Spleen (tissue), 13 donors: ENCODE measurements at regions of chr2 and their contacts with region 1.

Region 1: GRCh38 chr2:64727013-64727767 is 73.5 kb upstream of the SERTAD2 start:
- DNase-seq: no peak
- H3K4me3 ChIP-seq: peak overlapping the region in 2 of 8 donors; percentile 2 to 30
- H3K27ac ChIP-seq: peak overlapping the region; percentile 72 to 91 (median 86)
- H3K4me1 ChIP-seq: peaks cover 38 to 65% (median 56%) of the 10 kb centered on the region in 6 donors
- H3K27me3 ChIP-seq: no peaks in the 10 kb centered on the region
- CTCF ChIP-seq: no peak
- POLR2A ChIP-seq: peak in 1 of 3 donors; percentile 9

Region 2: GRCh38 chr2:64675860-64676259 is 51.3 kb before region 1 on chr2:
- intact Hi-C with region 1: loop called (anchors 10 kb)
- DNase-seq: no peak
- H3K4me3 ChIP-seq: no peak overlapping the region
- H3K27ac ChIP-seq: no peak overlapping the region
- H3K4me1 ChIP-seq: peaks cover 0 to 31% (median 3%) of the 10 kb centered on the region in 6 donors
- H3K27me3 ChIP-seq: no peaks in the 10 kb centered on the region
- CTCF ChIP-seq: no peak
- POLR2A ChIP-seq: no peak